Activated CD8-positive, alpha-beta memory T cell treated with anti-CD3 and anti-CD28 coated beads, Interleukin-2, amount 10 ng/mL, durations not matched to agents 7 days and 5 days (primary cell): ENCODE measurements at regions of chr21 and their contacts with region 1.

Region 1: GRCh38 chr21:42449296-42449927 is 45.7 kb downstream of the UBASH3A start:
- DNase-seq: no peak
- ATAC-seq: no peak
- H3K4me3 Mint-ChIP-seq: no peak overlapping the region
- H3K27ac Mint-ChIP-seq: peak overlapping the region; percentile 82
- H3K4me1 Mint-ChIP-seq: peaks cover 49% of the 10 kb centered on the region
- H3K27me3 Mint-ChIP-seq: no peaks in the 10 kb centered on the region

Region 2: GRCh38 chr21:42309753-42310221 is 139.6 kb before region 1 on chr21:
- CTCF ChIA-PET with region 1: interaction called, 22 read pairs
- DNase-seq: peak; percentile 81
- ATAC-seq: peak; percentile 79
- H3K4me3 Mint-ChIP-seq: no peak overlapping the region
- H3K27ac Mint-ChIP-seq: no peak overlapping the region
- H3K4me1 Mint-ChIP-seq: peaks cover 18% of the 10 kb centered on the region
- H3K27me3 Mint-ChIP-seq: peaks cover 20% of the 10 kb centered on the region

Region 3: DNA sequence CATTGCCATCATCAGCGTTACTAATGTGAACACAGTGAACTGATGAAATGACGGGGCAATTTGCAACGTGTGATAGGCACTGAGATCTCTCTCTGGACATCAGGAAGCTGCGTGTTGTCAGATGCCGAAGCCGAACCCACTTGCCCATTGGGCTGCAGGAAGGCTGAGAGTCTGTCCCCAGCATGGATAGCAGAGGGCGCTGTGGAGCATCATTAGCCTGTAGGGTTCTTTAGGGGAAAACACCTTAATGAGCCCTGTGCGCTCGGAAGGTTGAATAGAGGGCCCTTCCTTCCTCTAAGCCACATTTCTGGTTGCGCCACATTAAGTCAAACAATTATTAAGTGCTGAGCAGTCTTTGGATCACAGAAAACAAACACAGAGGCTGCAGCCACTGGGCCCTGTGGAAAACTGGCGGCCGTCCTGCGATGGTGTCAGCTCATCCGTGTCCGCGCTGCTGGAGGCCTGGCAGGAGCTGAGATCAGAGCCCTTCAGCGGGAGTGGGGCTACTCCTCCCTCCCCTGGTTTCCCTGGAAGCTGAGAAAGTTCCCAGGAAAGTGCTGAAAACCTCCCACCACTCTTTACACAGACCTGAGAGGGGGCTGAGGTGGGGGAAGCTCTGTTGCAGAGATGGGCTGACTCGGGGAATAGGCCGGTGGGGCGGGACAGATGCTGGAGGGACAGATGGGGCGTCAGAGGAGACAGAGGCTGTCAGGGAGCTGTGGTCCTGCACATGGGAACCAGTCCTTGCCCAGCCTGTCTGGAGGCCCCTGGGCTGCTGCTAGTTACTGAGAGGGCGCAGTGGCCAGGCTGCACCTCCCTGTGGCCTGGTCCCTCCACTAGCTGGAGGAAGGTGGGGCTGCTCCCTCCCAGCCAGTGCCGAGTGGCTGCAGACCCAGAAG is 111.3 kb before region 1 on chr21:
- CTCF ChIA-PET with region 1: interaction called, 10 read pairs
- DNase-seq: peak; percentile 87
- ATAC-seq: peak; percentile 90
- H3K4me3 Mint-ChIP-seq: no peak overlapping the region
- H3K27ac Mint-ChIP-seq: no peak overlapping the region
- H3K4me1 Mint-ChIP-seq: peaks cover 27% of the 10 kb centered on the region
- H3K27me3 Mint-ChIP-seq: peaks cover 18% of the 10 kb centered on the region

Region 4: DNA sequence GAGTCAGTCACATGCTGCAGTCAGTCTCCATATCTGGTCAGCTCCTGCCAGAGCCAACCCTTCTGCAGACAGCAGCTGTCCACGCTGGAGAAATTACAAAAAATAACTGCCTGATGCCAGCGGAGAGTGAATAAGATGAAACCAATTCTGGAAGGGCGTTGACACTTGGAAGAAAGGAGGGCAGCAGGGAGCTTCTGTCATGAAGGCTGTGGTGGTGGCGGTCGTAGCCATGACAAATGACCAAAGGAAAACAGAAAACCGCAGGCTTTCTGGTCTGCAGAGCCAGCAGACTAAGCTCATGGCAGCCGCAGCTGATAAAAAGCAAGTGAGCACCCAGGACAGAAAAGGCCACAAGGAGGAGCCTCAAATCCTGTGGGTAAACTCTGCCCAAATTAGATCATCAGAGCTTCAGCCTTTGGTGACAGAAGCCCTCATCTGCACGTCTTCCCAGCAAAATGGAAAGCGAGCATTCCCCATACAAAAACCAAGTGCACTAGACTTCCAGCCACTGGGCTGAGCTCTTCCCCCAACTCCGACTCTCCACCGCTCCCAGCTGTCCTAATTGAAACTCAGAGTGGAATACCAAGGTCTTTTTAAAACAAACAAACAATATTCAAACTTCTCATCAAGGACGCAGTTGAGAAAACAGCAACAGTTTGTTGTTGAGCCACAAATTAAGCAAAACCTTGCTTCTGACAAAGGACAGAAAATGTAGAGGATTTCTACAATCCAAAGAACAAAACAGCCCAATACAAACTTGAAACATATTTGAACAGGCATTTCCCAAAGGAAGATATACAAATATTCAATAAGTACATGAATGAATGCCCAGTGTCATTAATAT is 17.9 kb after region 1 on chr21:
- CTCF ChIA-PET with region 1: interaction called, 15 read pairs
- DNase-seq: peak; percentile 66
- ATAC-seq: peak; percentile 28
- H3K4me3 Mint-ChIP-seq: no peak overlapping the region
- H3K27ac Mint-ChIP-seq: no peak overlapping the region
- H3K4me1 Mint-ChIP-seq: peaks cover 43% of the 10 kb centered on the region
- H3K27me3 Mint-ChIP-seq: peaks cover 4% of the 10 kb centered on the region

Region 5: GRCh38 chr21:42737951-42738590 is 288.7 kb after region 1 on chr21:
- CTCF ChIA-PET with region 1: no interaction called
- DNase-seq: no peak
- ATAC-seq: peak; percentile 77
- H3K4me3 Mint-ChIP-seq: peak overlapping the region; percentile 24
- H3K27ac Mint-ChIP-seq: peak overlapping the region; percentile 91
- H3K4me1 Mint-ChIP-seq: peaks cover 55% of the 10 kb centered on the region
- H3K27me3 Mint-ChIP-seq: peaks cover 5% of the 10 kb centered on the region